Lower leg skin (tissue), 4 donors: ENCODE measurements at regions of chr18 and their contacts with region 1.

Region 1: GRCh38 chr18:50044402-50044801 is 150.5 kb downstream of the MYO5B start:
- DNase-seq: no peak
- H3K4me3 ChIP-seq: no peak overlapping the region
- CTCF ChIP-seq: no peak
- POLR2A ChIP-seq: no peak

Region 2: GRCh38 chr18:49677762-49678413 is 366.5 kb before region 1 on chr18:
- intact Hi-C with region 1: no loop called
- DNase-seq: no peak
- H3K4me3 ChIP-seq: no peak overlapping the region
- CTCF ChIP-seq: no peak
- POLR2A ChIP-seq: no peak

Region 3: DNA sequence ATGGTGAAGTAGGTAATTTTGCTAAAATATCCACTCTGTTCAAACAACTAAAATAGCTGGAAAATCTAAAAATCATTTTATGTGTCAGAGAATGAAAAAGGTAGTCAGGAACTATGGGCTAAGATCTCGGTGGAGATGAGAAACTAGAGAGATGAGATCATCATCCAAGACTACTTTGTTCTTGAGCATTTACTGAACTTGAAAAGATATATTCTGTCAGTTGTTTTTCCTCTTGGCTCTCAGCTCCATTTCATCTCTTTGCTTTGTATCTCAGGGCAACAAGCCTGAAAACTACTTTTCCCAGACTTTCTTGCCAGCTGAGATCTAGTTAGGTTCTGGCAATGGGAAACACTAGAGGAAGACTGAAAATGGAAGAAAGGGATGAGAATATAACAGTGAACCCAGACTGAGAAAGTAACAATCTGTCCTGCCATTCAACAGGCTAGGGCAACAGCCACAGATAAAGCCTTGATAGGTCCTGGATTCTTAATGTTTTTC is 1499.3 kb after region 1 on chr18:
- intact Hi-C with region 1: loop called (anchors 10 kb)
- DNase-seq: no peak
- H3K4me3 ChIP-seq: no peak overlapping the region
- CTCF ChIP-seq: no peak
- POLR2A ChIP-seq: no peak